Ascending aorta (tissue), 2 donors: ENCODE measurements at regions of chr18 and their contacts with region 1.

Region 1: GRCh38 chr18:54224379-54225014 is at the start of gene MBD2:
- DNase-seq: peak; percentile 84 to 98
- H3K4me3 ChIP-seq: peak within 1 kb of the TSS; percentile 82 to 97
- H3K27ac ChIP-seq: peak within 1 kb of the TSS; percentile 63 to 69
- H3K4me1 ChIP-seq: peaks cover 4 to 18% of the 10 kb centered on the region in 2 donors
- H3K27me3 ChIP-seq: no peaks in the 10 kb centered on the region
- CTCF ChIP-seq: peak in 2 of 3 experiments; percentile 14 to 26
- total RNA-seq, gene MBD2: 111 TPM

Region 2: DNA sequence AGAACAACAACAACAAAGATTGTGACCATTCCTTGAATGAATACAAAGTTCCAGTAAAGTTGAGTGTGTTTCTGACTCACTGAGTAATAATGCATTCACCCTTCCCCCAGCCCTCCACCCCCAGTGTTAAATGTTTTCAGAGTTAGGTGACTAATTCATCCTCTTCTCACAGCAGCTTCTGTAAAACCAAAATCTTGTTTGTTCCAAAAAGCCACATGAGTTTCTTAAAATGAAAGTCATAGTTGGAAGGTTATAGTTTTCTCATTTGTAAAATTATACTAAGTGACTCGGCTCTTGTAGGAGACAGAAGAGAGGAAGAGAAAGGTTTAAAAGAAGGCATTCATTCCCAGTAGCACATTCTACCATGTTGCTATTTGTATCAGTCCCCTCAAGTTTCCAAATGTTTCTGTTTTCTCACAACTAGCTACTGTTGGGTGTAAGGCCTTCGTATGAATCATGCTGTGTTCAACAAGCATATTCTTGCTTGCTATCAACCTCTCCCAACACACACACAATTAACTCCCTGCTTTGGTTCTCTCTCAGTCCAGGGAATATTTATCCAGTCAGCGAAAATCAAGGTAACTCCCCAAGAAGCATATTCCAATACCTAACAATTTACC is 75.3 kb before region 1 on chr18:
- intact Hi-C with region 1: loop called (anchors 2 kb)
- DNase-seq: peak in 1 of 2 donors; percentile 75
- H3K4me3 ChIP-seq: no peak overlapping the region
- H3K27ac ChIP-seq: peak overlapping the region; percentile 69 to 70
- H3K4me1 ChIP-seq: peaks cover 0 to 7% of the 10 kb centered on the region in 2 donors
- H3K27me3 ChIP-seq: no peaks in the 10 kb centered on the region
- CTCF ChIP-seq: no peak

Region 3: GRCh38 chr18:54251606-54252407 is 27.3 kb after region 1 on chr18:
- intact Hi-C with region 1: loop called (anchors 2 kb)
- DNase-seq: no peak
- H3K4me3 ChIP-seq: no peak overlapping the region
- H3K27ac ChIP-seq: peak overlapping the region; percentile 55 to 60
- H3K4me1 ChIP-seq: peaks cover 0 to 22% of the 10 kb centered on the region in 2 donors
- H3K27me3 ChIP-seq: no peaks in the 10 kb centered on the region
- CTCF ChIP-seq: no peak

Region 4: GRCh38 chr18:54269893-54270844 is 45.7 kb after region 1 on chr18:
- intact Hi-C with region 1: loop called (anchors 1 kb)
- DNase-seq: peak in 1 of 2 donors; percentile 76
- H3K4me3 ChIP-seq: peak overlapping the region; percentile 86 to 88
- H3K27ac ChIP-seq: peak overlapping the region; percentile 84 to 93
- H3K4me1 ChIP-seq: peaks cover 0 to 6% of the 10 kb centered on the region in 2 donors
- H3K27me3 ChIP-seq: no peaks in the 10 kb centered on the region
- CTCF ChIP-seq: peak; percentile 22 to 46 (median 39)

Region 5: DNA sequence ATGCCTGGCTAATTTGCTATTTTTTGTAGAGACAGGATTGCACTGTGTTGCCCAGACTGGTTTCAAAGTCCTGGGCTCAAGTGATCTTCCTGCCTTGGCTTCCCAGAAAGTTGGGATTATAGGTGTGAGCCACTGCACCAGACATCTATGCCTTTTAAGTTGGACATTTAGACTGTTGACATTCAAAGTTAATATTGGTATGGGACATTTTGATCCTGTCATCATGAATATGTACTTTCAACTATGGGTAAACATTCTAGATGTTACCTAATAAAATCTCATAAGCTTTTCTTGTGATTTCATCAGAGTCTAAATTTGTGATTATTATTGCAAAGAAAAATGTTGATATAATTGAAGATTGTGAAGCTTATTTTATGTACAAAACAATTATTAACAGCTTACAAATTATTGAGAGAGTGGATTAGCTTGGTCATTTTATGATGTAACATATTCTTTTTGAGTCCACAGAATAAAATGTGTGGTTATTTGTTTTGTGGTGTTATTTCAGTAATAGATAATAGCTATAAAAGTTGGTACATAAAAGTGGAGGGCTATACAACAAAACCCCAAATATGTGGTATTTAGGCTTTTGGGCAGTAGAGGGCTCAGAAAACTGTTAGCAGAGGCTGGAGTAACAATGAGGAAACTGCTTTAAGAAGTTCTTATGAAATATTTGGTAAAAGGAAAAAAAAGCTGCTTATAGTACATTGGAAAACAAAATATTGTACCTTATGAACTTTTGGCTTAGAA is 91.7 kb after region 1 on chr18:
- intact Hi-C with region 1: no loop called
- DNase-seq: no peak
- H3K4me3 ChIP-seq: no peak overlapping the region
- H3K27ac ChIP-seq: no peak overlapping the region
- H3K4me1 ChIP-seq: no peaks in the 10 kb centered on the region
- H3K27me3 ChIP-seq: no peaks in the 10 kb centered on the region
- CTCF ChIP-seq: no peak

Region 6: DNA sequence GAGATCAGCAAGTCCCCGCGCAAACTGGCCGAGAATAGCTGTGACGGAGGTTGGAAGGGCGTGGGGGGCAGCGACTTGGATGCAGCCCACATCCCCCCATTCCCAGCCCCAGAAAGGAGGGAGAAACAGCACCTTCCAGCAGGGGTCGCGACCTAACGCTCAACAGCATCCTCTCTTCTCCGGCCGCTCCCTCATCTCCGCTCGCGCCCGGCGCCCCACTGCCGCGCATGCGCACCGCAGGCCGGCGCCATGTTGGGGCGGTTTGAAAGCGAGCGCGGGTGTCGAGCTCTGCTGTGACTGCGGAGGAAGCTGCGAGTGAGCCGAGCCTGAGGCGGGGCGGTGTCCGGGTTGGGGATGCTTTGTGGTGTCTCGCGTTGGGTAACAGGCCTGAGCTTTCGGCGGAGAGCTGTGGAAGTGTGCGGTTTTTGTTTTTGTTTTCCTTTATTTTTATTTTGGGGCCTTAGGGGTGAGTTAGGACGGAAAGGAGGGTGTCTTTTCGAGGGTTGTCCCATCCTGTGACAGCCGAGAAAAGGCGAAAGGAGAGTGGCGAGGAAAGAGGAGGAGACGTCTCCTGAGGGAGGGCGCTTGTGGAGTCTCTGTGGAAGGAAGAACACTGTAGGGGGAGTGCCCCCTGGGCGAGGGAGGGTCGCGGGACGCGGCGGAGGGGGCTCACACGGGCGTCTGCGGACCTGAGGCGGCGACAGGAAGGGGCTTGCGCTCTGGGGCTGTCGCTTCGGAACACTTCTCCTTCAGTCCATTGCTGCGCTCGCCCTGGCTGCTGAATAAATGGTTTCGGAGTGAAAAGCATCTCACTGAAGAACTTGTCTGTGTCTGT is 133.4 kb after region 1 on chr18 and contains the starts of genes C18orf54 and STARD6:
- intact Hi-C with region 1: loop called (anchors 5 kb)
- DNase-seq: peak; percentile 45 to 91
- H3K4me3 ChIP-seq: peak within 1 kb of the TSS; percentile 77 to 88
- H3K27ac ChIP-seq: peak within 1 kb of the TSS; percentile 19 to 33
- H3K4me1 ChIP-seq: no peaks in the 10 kb centered on the region
- H3K27me3 ChIP-seq: no peaks in the 10 kb centered on the region
- CTCF ChIP-seq: peak in 1 of 3 experiments; percentile 23
- total RNA-seq, gene C18orf54: 0.96 TPM
- total RNA-seq, gene STARD6: not detected

Region 7: DNA sequence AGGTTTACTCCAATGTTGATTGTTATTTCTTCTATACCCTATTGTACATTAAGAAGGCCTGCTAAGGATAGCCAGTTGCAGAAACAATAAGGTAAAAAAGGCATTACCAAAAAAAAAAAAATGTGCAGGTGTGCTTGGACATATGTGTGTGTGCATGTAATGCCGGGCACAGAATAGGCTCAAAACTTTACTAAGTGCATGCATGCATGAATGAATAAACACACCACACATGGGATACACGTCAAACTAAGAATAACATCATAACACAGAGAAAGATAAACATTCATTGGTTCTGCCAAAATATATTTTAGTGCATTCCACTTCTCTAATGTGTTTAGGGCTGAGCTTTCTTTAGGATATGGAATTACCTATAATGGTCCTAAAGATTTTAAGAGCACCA is 1065.3 kb after region 1 on chr18:
- intact Hi-C with region 1: no loop called
- DNase-seq: no peak
- H3K4me3 ChIP-seq: no peak overlapping the region
- H3K27ac ChIP-seq: no peak overlapping the region
- H3K4me1 ChIP-seq: peaks cover 0 to 38% of the 10 kb centered on the region in 2 donors
- H3K27me3 ChIP-seq: no peaks in the 10 kb centered on the region
- CTCF ChIP-seq: no peak